Right ventricle myocardium inferior (tissue), 1 donor: ENCODE measurements at regions of chr4 and their contacts with region 1.

Region 1: DNA sequence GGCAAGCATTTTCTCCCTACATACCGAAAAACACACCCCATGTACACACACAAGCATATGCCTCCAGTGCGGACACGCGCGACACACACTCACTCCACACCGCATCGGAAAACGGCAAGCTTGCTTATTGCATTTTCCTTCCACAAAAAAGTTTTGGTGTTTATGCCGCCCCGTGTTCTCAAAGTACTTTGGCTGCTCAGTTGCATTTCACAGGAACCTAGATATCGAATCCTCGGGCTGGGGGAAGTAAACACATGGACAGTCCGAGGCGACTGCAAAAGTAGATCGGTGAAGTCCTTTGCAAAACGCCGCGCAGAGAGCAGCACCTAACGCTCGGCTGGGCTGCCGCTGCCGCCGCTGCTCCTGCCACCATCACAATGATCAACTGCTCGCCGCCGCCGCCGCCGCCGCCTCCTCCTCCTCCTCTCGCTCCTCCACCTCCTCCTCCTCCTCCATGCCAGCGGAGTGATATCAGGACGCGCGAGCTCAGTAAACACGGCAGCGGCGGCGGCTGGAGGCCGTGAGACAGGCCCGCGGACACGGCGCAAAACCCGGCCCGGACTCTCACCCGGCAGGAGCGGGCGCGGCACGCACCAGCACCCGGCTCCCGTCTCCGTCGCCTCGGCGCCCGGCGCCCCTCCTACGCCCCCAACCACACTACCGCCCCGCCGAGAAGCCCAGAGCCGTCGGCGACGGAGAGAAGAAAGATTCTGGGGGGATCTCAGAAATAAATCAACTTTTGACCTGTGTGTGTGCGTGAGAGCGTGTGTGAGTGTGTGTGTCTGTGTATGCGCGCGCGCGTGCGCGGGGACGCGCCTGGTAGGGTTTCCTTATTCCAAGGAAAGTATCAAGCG is at the start of gene MAML3:
- DNase-seq: peak; percentile 97
- ATAC-seq: peak; percentile 75
- total RNA-seq, gene MAML3: 2.3 TPM

Region 2: GRCh38 chr4:139665690-139666529 is 488.0 kb before region 1 on chr4 and contains the start of gene MGST2:
- intact Hi-C with region 1: loop called (anchors 5 kb)
- DNase-seq: peak; percentile 88
- ATAC-seq: peak; percentile 95
- total RNA-seq, gene MGST2: 101 TPM

Region 3: GRCh38 chr4:139763672-139764071 is 390.3 kb before region 1 on chr4:
- intact Hi-C with region 1: loop called (anchors 2 kb)
- DNase-seq: no peak
- ATAC-seq: peak; percentile 66

Region 4: DNA sequence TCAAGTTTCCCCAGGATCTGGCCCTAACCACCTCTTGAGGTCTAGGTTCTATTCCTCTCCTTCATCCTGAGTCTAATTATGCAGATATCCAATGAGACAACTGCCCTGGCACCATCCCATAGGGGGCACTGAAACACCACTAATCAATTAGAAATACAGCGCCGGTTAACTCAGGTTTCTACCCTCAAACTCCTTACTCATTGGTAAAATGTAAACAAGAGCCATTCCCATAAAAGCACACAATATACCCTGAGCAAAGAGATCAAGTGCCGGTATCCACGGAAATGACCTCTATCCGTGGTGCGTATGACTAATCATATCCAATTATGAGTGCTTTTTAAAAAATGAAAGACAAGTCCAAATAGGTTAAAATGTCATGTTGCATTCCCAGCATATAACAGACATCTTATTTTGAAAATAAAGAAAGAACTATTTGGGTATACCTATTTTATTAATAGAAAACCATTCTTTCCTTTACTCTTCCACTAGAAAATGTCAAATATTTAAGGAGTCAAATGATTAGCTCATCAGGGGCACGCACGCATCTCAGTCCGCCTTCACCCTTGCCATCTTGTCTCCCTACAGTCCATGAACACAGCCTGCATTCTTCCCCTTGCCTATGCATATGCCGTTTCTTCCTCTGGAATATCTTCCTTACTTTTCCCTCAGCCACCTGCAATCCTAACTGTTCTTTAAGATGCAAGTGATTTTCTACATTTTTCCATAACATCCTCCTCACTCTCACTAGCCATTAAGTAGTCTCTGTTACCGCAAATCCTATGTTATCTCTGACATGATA is 141.1 kb before region 1 on chr4:
- intact Hi-C with region 1: loop called (anchors 2 kb)
- DNase-seq: no peak
- ATAC-seq: peak; percentile 87

Region 5: GRCh38 chr4:140095694-140096482 is 58.1 kb before region 1 on chr4:
- intact Hi-C with region 1: loop called (anchors 1 kb)
- DNase-seq: no peak
- ATAC-seq: no peak

Region 6: DNA sequence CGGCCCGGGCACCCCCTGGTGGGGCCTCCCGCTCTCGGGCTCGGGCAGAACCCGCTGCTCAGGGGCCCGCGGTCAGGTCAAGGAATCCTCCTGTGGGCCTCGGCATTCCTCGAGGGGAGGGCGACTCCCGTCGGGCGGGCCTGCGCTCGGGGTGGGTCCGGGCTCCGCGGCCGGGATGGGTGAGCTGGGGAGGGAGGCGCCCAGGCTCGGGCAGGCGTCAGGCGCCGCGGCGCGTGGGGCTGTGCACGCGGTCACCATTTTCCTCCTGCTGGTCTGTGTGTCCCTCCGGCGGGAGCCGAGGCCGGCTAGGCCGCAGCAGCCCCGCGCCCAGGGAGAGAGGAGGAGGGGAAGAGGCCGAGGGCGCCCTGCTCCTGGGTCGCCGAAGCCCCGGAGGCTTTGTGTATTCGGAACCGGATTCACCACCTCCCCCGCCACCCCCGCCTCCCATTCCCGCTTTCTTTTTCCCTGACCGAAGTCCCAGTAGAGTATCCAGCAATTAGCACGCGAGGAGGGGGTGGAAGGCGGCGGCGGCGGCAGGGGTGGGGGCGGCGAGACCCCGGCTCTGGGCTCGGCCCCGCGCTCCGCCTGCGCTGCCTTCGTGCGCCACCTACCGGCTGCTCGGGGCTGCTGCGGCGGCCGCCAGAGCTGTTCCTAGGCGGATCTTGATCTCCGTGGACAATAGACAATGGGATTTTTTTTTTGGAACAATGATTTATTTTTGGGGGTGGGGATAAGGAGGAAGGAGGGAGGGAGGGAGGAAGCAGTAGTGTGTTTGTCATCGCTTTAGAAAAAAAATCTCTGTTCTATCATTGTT is 99.0 kb after region 1 on chr4:
- intact Hi-C with region 1: loop called (anchors 1 kb)
- DNase-seq: peak; percentile 88
- ATAC-seq: peak; percentile 86